Endothelial cell of umbilical vein (primary cell): ENCODE measurements at regions of chr4 and their contacts with region 1.

Region 1: GRCh38 chr4:140081641-140082390 is 72.2 kb downstream of the MAML3 start:
- DNase-seq: peak; percentile 62
- H3K4me3 ChIP-seq: no peak overlapping the region
- H3K27ac ChIP-seq: no peak overlapping the region
- H3K4me1 ChIP-seq: peaks cover 22% of the 10 kb centered on the region
- H3K27me3 ChIP-seq: no peaks in the 10 kb centered on the region
- CTCF ChIP-seq: no peak
- POLR2A ChIP-seq: no peak

Region 2: GRCh38 chr4:139857021-139857420 is 224.8 kb before region 1 on chr4:
- CTCF ChIA-PET with region 1: no interaction called
- POLR2A ChIA-PET with region 1: no interaction called
- dilution Hi-C with region 1: no loop called
- intact Hi-C with region 1: no loop called
- DNase-seq: peak; percentile 29
- H3K4me3 ChIP-seq: no peak overlapping the region
- H3K27ac ChIP-seq: no peak overlapping the region
- H3K4me1 ChIP-seq: peaks cover 5% of the 10 kb centered on the region
- H3K27me3 ChIP-seq: no peaks in the 10 kb centered on the region
- CTCF ChIP-seq: no peak
- POLR2A ChIP-seq: no peak

Region 3: DNA sequence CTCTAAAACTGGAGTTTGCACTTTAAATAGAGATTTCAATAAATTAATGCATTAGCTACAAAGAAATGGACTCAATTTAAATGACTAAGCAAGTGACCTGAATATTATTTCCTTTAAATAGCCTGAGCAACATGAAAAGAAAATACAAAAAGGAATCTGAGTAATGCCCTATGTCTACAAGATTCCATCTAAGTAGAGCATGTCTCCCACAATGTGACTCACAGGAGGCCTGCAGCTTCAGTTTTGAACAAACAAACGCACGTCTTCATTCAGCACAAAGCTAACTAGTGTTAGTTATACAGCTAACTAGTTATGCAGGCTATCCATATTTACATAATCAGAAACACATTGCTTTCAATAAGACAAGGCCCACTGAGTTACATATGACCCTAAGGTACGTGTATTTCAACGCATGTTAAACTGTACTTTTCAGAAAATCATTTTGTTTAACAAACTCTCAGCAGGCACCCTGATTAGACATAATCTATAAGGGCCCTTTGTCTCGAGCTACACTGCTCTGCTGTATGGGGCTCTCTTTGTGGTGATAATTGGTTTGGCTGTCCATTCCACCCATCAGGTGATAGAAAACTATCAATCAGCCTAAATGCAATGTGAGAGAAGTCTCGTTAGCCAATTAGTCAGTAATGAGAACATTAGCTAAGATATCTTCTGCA is 44.3 kb before region 1 on chr4:
- CTCF ChIA-PET with region 1: no interaction called
- POLR2A ChIA-PET with region 1: no interaction called
- dilution Hi-C with region 1: no loop called
- intact Hi-C with region 1: no loop called
- DNase-seq: peak; percentile 93
- H3K4me3 ChIP-seq: peak overlapping the region in 1 of 3 experiments; percentile 45
- H3K27ac ChIP-seq: peak overlapping the region; percentile 99
- H3K4me1 ChIP-seq: peaks cover 29% of the 10 kb centered on the region
- H3K27me3 ChIP-seq: no peaks in the 10 kb centered on the region
- CTCF ChIP-seq: no peak
- POLR2A ChIP-seq: peak; percentile 41

Region 4: DNA sequence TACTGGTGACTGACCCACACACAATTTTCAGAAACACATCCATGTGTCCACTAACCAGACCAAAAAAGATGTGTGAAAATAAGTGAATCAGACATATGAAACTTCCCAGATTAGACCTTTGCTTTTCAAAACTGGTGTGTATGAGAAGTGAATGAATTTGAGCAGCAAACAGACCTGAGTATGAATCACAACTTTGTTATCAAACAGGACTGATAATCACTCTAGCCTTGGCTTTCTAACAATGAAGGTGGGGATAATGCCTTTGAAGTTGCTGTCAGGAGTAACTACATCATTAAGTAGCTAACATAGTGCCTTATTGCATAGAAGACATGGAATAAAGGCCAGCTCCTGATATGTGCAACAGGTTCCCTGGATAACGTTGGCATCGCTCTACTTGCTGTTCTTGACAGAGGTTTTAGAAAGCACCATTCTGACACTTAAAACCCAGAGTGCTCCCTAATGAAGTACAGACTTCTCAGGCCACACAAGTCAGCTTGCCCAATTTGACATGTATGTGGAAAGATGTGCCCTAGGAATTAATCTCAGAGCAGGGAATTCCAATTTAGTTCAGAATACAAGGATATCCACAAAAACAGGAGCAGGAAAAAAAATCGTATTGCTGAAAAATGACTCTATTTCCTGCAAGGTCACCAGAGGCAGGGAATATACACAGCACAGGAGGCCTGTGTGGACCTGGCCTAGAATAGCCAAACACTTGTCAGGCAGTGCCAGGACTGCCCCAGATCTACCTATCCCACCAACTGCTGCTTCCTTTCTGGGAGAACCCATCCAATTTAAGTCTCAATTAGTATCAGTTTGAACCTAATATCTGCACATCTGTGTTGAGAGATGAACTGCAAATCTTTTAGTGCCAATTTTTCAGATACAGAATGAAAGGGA is 15.5 kb before region 1 on chr4:
- CTCF ChIA-PET with region 1: interaction called, 4 read pairs
- POLR2A ChIA-PET with region 1: no interaction called
- dilution Hi-C with region 1: no loop called
- intact Hi-C with region 1: loop called (anchors 2 kb)
- DNase-seq: peak; percentile 58
- H3K4me3 ChIP-seq: no peak overlapping the region
- H3K27ac ChIP-seq: no peak overlapping the region
- H3K4me1 ChIP-seq: peaks cover 17% of the 10 kb centered on the region
- H3K27me3 ChIP-seq: no peaks in the 10 kb centered on the region
- CTCF ChIP-seq: no peak
- POLR2A ChIP-seq: no peak

Region 5: DNA sequence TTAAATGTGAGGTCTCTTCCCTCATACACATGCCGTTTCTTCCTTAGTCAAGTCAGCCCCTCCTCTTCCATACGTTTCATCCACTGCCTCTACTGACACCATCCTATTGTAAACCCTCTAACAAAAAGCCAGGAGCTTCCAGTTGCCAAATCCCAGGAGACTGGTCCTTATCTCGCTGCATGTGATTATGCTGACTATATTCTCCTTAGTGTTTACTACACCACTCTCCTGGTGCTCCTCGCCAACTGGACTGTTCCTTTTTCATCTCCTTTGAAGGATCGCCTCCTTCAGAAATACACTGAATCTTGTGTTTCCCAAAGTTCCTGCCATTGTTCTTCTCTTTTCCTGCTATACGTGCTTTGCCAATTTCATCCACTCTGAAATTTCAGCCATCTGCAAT is 44.4 kb after region 1 on chr4:
- CTCF ChIA-PET with region 1: no interaction called
- POLR2A ChIA-PET with region 1: no interaction called
- dilution Hi-C with region 1: no loop called
- intact Hi-C with region 1: no loop called
- DNase-seq: peak; percentile 86
- H3K4me3 ChIP-seq: no peak overlapping the region
- H3K27ac ChIP-seq: no peak overlapping the region
- H3K4me1 ChIP-seq: peaks cover 6% of the 10 kb centered on the region
- H3K27me3 ChIP-seq: no peaks in the 10 kb centered on the region
- CTCF ChIP-seq: no peak
- POLR2A ChIP-seq: no peak

Region 6: GRCh38 chr4:140260227-140260626 is 178.4 kb after region 1 on chr4:
- CTCF ChIA-PET with region 1: no interaction called
- POLR2A ChIA-PET with region 1: no interaction called
- dilution Hi-C with region 1: no loop called
- intact Hi-C with region 1: no loop called
- DNase-seq: peak; percentile 66
- H3K4me3 ChIP-seq: no peak overlapping the region
- H3K27ac ChIP-seq: peak overlapping the region; percentile 31
- H3K4me1 ChIP-seq: peaks cover 37% of the 10 kb centered on the region
- H3K27me3 ChIP-seq: no peaks in the 10 kb centered on the region
- CTCF ChIP-seq: no peak
- POLR2A ChIP-seq: no peak